ENCODE measurements at regions of chr2 and their contacts with region 1.

Region 1: GRCh38 chr2:218466016-218466521 is 47.1 kb downstream of the VIL1 start:
- DNase-seq: no peak
- H3K4me3 ChIP-seq: no peak overlapping the region
- H3K27ac ChIP-seq: no peak overlapping the region
- H3K4me1 ChIP-seq: no peaks in the 10 kb centered on the region
- H3K27me3 ChIP-seq: no peaks in the 10 kb centered on the region
- CTCF ChIP-seq: peak; percentile 30 to 39

Region 2: DNA sequence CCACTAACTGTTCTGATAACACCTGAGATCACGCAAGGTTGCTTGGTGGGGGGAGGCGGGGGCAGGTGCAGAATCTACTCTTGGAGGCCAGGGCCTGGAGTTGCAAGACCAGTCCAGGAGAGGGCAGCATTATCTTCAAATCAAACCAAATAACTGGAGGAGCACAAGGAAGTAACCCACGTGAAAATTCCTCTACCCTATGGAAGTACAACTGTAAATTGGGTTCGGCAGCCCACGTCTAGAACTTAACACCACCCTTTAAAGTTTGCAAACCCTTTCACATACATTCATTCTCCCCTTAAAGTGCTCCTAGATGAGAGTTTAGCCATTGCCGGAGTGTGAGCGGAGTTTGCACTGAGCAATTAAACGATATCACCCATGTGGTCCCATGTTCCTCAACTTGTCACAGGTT is 279.7 kb before region 1 on chr2:
- CTCF ChIA-PET with region 1: no interaction called
- dilution Hi-C with region 1: no loop called
- in situ Hi-C with region 1: no loop called
- intact Hi-C with region 1: loop called (anchors 5 kb)
- DNase-seq: peak; percentile 57
- H3K4me3 ChIP-seq: no peak overlapping the region
- H3K27ac ChIP-seq: no peak overlapping the region
- H3K4me1 ChIP-seq: peaks cover 4% of the 10 kb centered on the region
- H3K27me3 ChIP-seq: no peaks in the 10 kb centered on the region
- CTCF ChIP-seq: peak; percentile 82 to 84

Region 3: DNA sequence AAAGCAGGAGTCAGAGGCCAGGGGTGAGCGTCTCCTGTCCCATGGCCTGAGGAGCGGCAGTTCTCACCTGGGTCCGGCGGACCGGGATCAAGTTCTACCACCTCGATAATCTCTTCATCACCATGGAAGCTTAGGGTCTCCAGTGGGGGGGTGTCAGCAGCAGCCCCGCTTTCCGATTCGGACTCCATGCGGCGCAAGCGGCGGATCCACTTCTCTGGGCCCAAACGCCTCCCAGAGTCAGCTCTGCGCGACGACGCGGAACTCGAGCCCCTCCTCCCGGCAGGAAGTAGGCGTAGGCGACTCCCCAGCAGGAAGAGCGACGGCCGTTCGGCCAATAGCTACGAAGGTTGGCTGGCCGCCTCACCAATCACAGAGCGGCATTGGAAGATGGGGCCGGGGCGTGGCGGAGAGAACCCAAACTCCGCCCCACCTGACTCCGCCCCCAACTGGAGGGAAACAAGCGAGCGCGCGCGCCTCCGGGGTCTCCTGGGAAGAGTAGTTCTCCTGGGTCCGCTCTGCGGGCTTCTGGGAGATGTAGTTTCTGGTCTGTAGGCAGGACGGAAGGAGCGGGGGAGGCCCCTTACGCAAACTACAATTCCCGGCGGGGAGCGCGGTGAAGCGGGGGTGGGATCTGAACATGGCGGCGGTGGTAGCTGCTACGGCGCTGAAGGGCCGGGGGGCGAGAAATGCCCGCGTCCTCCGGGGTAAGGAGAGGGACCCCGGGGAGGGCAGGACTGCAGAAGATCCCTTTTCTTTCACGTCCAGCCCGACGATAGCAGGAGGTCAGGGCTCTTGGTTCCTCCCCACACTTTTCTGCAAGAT is 196.0 kb before region 1 on chr2 and contains the starts of genes AAMP and PNKD:
- CTCF ChIA-PET with region 1: no interaction called
- dilution Hi-C with region 1: no loop called
- in situ Hi-C with region 1: no loop called
- intact Hi-C with region 1: loop called (anchors 1 kb)
- DNase-seq: peak; percentile 100
- H3K4me3 ChIP-seq: peak within 1 kb of the TSS; percentile 72 to 91 (median 81)
- H3K27ac ChIP-seq: peak within 1 kb of the TSS; percentile 62
- H3K4me1 ChIP-seq: peaks cover 17% of the 10 kb centered on the region
- H3K27me3 ChIP-seq: no peaks in the 10 kb centered on the region
- CTCF ChIP-seq: peak in 1 of 2 donors; percentile 36
- total RNA-seq, gene AAMP: 80.2 to 87.6 TPM
- total RNA-seq, gene PNKD: 15.7 to 29.8 TPM

Region 4: DNA sequence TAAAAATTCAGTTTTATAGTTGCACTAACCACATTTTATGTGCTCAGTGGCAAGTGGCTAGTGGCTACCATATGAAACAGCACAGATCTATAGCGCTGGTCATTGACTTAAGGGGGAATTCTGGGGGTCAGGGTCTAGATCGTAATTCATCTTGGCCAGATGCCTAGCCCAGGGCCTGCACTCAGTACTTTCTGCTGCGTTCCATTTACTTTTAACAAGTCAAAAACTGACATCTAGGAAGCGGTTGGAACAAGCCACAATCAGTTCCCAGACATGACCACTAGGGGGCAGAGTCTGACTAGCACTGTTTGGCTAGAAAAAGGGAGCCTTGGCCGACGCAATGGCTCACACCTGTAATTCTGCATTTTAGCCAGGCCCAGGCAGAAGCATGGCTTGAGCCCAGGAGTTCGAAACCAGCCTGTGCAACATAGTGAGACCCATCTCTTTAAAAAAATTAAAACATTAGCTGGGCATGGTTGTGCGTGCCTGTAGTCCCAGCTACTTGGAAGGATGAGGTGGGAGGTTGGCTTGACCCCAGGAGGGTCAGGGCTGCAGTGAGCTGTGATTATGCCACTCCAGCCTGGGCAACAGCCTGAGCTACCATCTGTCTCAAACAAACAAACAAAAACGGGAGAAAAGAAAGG is 164.8 kb before region 1 on chr2:
- CTCF ChIA-PET with region 1: no interaction called
- dilution Hi-C with region 1: no loop called
- in situ Hi-C with region 1: loop called in 1 of 2 experiments (anchors 10 kb)
- intact Hi-C with region 1: loop called (anchors 1 kb)
- DNase-seq: peak; percentile 74
- H3K4me3 ChIP-seq: no peak overlapping the region
- H3K27ac ChIP-seq: no peak overlapping the region
- H3K4me1 ChIP-seq: peaks cover 24% of the 10 kb centered on the region
- H3K27me3 ChIP-seq: no peaks in the 10 kb centered on the region
- CTCF ChIP-seq: peak; percentile 94

Region 5: DNA sequence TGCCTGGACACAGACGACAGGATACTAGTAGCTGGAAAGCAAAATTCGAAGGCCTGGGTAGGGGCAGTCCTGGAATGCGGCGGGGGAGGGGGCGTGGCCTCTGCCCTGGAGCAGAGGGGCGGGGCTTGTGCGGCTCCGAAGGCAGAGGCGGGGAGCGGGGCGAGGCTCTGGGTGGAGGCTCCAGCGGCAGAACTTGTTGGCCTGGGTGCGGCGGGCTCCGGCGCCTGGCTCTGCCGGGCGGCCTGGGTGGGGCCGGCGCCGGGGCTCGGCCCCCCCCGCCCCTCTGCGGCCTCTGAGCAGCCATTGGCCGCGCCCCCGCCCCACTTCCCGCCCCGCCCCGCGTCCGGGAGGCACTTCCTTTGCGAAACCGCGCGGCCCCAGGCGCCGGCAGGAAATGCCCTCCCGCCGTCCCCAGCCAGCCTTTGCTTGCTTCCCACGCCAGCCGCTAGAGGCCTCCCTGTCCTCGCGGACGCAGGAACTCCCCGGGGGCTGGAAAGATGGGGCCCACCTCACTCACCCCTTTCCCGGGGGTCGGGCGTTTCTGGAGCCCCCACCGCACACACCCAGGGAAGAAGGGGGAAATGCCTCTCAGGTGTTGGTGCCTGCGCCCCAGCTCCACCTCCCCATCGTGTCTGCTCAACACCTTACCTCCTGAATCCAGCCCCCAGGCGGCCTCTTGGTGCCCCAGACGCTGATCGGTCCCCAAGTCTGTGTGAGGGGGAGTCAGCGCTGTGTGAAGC is 59.7 kb before region 1 on chr2:
- CTCF ChIA-PET with region 1: no interaction called
- dilution Hi-C with region 1: no loop called
- in situ Hi-C with region 1: loop called in 1 of 2 experiments (anchors 5 kb)
- intact Hi-C with region 1: loop called (anchors 1 kb)
- DNase-seq: peak; percentile 92
- H3K4me3 ChIP-seq: peak overlapping the region; percentile 29 to 45 (median 33)
- H3K27ac ChIP-seq: peak overlapping the region; percentile 58
- H3K4me1 ChIP-seq: peaks cover 30% of the 10 kb centered on the region
- H3K27me3 ChIP-seq: no peaks in the 10 kb centered on the region
- CTCF ChIP-seq: peak; percentile 45 to 87

Region 6: GRCh38 chr2:218429571-218430301 is 36.3 kb before region 1 on chr2:
- CTCF ChIA-PET with region 1: no interaction called
- dilution Hi-C with region 1: loop called (anchors 5 kb)
- in situ Hi-C with region 1: no loop called
- intact Hi-C with region 1: no loop called
- DNase-seq: no peak
- H3K4me3 ChIP-seq: no peak overlapping the region
- H3K27ac ChIP-seq: no peak overlapping the region
- H3K4me1 ChIP-seq: no peaks in the 10 kb centered on the region
- H3K27me3 ChIP-seq: peaks cover 2% of the 10 kb centered on the region
- CTCF ChIP-seq: no peak

Region 7: GRCh38 chr2:218523651-218524050 is 57.6 kb after region 1 on chr2:
- CTCF ChIA-PET with region 1: no interaction called
- dilution Hi-C with region 1: loop called (anchors 5 kb)
- in situ Hi-C with region 1: no loop called
- intact Hi-C with region 1: no loop called
- DNase-seq: no peak
- H3K4me3 ChIP-seq: no peak overlapping the region
- H3K27ac ChIP-seq: no peak overlapping the region
- H3K4me1 ChIP-seq: no peaks in the 10 kb centered on the region
- H3K27me3 ChIP-seq: no peaks in the 10 kb centered on the region
- CTCF ChIP-seq: no peak

Region 8: DNA sequence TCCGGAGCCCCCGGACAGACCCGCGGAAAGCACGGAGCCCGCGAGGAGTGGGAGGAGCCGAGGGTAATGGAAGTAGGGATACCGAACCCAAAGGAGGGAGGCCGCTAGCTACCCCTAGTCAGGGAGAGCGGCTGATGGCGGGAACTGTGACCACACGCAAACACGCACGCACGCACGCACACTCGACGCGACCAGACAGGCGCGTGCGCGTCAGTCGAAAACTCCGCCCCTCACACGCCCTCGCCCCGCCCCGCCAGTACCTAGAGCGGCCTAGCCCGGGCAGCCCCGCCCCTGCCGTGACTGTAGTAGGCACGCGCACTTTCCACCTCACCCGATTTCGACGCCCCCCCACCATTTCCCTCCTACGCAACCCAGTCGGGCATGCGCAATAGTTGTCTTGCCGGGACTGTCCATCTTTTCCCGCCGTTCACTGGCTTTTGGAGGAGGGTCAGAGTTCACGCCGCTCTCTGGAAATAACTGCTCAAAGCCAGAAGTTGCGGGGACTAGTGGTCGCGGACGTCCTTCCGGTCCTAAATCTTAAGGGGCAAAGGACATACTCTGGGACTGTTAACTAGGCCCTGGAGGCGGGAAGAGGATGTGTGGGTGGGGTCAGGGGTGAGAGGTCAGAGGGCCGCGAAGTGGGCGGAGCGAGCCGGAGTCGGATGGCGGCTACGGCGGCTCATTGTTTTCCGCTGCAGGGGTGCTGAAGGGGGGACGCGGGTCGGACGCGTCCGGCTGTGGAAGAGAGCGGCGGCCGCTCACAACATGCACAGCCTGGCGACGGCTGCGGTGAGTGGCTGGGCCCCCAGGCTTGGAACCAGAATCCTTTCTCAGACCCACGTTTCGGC is 102.3 kb after region 1 on chr2 and contains the starts of genes CNOT9 and USP37:
- CTCF ChIA-PET with region 1: no interaction called
- dilution Hi-C with region 1: no loop called
- in situ Hi-C with region 1: no loop called
- intact Hi-C with region 1: no loop called
- DNase-seq: peak; percentile 98
- H3K4me3 ChIP-seq: peak within 1 kb of the TSS; percentile 62 to 98 (median 94)
- H3K27ac ChIP-seq: peak within 1 kb of the TSS; percentile 96
- H3K4me1 ChIP-seq: peaks cover 26% of the 10 kb centered on the region
- H3K27me3 ChIP-seq: no peaks in the 10 kb centered on the region
- CTCF ChIP-seq: no peak
- total RNA-seq, gene CNOT9: 39.8 to 53.3 TPM
- total RNA-seq, gene USP37: 10.7 to 14.6 TPM